Endothelial cell of umbilical vein (primary cell): ENCODE measurements at regions of chr17 and their contacts with region 1.

Region 1: DNA sequence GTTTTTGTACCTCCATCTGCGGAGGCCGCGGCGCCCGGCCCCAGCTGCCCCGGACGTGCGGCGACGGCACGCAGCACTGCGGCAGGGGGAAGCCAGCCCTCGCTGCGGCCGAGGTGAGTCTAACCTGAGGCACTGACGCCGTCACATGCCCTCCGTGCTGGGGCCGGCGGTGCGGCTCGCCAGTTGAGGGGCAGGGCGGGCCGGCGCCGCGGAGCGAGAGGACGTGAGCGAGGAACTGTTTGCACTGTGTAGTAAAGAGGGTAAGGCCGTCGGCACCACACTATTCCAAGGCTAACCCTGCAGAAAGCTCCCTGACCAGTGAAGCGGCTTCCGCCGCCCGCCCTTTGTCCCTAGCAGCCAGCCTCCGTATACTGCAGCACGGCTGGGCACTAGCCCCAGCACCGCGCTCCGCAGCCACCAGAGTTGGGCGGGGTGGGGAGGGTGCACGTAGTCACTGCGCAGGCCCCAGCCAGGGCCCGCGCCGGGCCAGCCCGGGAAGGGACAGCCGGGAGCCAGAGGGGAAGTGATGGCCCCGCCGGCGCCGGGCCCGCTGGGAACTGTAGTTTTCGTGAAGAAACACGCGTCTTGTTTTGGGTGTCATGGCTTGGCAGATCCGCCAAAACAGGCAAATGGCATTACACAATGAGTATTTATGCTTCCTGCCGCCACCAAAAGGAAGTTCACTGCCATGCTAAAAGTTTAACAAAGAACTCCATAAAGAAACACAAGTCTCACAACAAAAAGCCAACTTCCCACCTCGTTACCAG is 580 bp upstream of the KANSL1 start:
- DNase-seq: peak; percentile 95
- H3K4me3 ChIP-seq: peak overlapping the region; percentile 33 to 90 (median 64)
- H3K27ac ChIP-seq: peak overlapping the region; percentile 62
- H3K4me1 ChIP-seq: peaks cover 26% of the 10 kb centered on the region
- H3K27me3 ChIP-seq: no peaks in the 10 kb centered on the region
- CTCF ChIP-seq: no peak
- POLR2A ChIP-seq: peak; percentile 84

Region 2: GRCh38 chr17:45940826-45941225 is 253.0 kb before region 1 on chr17:
- CTCF ChIA-PET with region 1: no interaction called
- POLR2A ChIA-PET with region 1: no interaction called
- dilution Hi-C with region 1: no loop called
- intact Hi-C with region 1: no loop called
- DNase-seq: no peak
- H3K4me3 ChIP-seq: no peak overlapping the region
- H3K27ac ChIP-seq: no peak overlapping the region
- H3K4me1 ChIP-seq: no peaks in the 10 kb centered on the region
- H3K27me3 ChIP-seq: peaks cover 8 to 13% of the 10 kb centered on the region in 2 experiments
- CTCF ChIP-seq: no peak
- POLR2A ChIP-seq: no peak

Region 3: DNA sequence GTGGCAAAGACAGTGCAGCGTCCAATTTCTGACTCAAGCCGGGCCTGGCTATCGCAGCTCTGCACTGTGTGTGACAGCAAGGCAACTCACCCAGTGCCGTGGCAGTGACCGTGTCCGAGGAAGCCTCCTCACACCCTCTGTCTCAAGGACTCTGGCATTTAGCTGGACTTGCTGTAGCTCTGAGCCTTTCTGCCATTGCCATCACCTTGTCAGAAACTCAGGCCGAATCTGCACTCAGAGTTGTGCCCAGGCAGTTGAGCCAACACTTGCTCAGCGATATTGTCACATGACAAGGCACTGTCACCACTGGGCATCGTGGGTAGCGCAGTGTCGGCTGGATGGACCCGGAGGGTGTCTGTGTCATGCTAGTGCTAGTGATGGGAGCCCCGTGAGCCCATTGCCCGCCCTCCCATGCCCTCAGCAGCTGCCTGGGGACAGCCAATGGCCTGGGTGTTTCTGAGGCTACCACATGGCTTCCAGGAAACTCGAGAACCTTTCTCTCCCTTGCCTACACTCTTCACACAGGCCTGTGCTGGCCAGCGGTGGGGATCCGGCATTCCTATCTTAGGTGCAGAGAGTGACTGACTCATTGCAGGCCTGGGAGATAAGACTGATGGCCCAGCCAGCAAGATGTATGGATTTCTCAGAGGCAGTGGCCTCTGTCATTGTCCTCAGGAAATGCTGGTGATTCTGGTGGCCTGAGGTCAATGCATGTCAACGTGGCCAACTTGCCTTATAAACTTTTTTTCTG is 216.9 kb before region 1 on chr17:
- CTCF ChIA-PET with region 1: no interaction called
- POLR2A ChIA-PET with region 1: no interaction called
- dilution Hi-C with region 1: no loop called
- intact Hi-C with region 1: no loop called
- DNase-seq: no peak
- H3K4me3 ChIP-seq: no peak overlapping the region
- H3K27ac ChIP-seq: no peak overlapping the region
- H3K4me1 ChIP-seq: no peaks in the 10 kb centered on the region
- H3K27me3 ChIP-seq: peaks cover 0 to 5% of the 10 kb centered on the region in 2 experiments
- CTCF ChIP-seq: no peak
- POLR2A ChIP-seq: no peak

Region 4: DNA sequence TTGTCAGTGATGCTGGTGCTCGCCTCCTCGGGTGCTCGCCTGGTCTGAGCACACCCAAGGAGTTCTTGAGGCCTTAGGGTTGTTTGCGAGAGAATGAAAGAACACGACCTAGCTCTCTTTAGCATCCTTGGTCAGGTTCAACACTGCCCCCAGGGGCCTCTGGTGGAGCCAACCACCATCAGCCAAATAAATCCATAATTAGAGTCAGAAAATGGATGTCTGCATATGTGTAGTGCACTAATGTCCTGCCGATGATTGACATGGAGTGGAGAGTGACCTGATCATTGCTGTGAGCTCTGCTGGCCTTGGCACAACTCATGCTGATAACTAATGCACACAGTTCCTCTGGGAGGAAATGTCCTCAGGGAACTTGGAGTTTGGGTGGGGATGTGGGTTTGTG is 202.9 kb before region 1 on chr17:
- CTCF ChIA-PET with region 1: no interaction called
- POLR2A ChIA-PET with region 1: no interaction called
- dilution Hi-C with region 1: no loop called
- intact Hi-C with region 1: no loop called
- DNase-seq: no peak
- H3K4me3 ChIP-seq: no peak overlapping the region
- H3K27ac ChIP-seq: no peak overlapping the region
- H3K4me1 ChIP-seq: no peaks in the 10 kb centered on the region
- H3K27me3 ChIP-seq: peaks cover 0 to 2% of the 10 kb centered on the region in 2 experiments
- CTCF ChIP-seq: no peak
- POLR2A ChIP-seq: no peak

Region 5: GRCh38 chr17:46002311-46002972 is 191.4 kb before region 1 on chr17:
- CTCF ChIA-PET with region 1: interaction called, 5 read pairs
- POLR2A ChIA-PET with region 1: no interaction called
- dilution Hi-C with region 1: no loop called
- intact Hi-C with region 1: loop called (anchors 5 kb)
- DNase-seq: peak; percentile 60
- H3K4me3 ChIP-seq: no peak overlapping the region
- H3K27ac ChIP-seq: no peak overlapping the region
- H3K4me1 ChIP-seq: no peaks in the 10 kb centered on the region
- H3K27me3 ChIP-seq: no peaks in the 10 kb centered on the region
- CTCF ChIP-seq: peak; percentile 79 to 81
- POLR2A ChIP-seq: no peak

Region 6: GRCh38 chr17:46061435-46061834 is 132.4 kb before region 1 on chr17:
- CTCF ChIA-PET with region 1: interaction called, 52 read pairs
- POLR2A ChIA-PET with region 1: no interaction called
- dilution Hi-C with region 1: no loop called
- intact Hi-C with region 1: loop called (anchors 1 kb)
- DNase-seq: peak; percentile 49
- H3K4me3 ChIP-seq: no peak overlapping the region
- H3K27ac ChIP-seq: no peak overlapping the region
- H3K4me1 ChIP-seq: peaks cover 19% of the 10 kb centered on the region
- H3K27me3 ChIP-seq: no peaks in the 10 kb centered on the region
- CTCF ChIP-seq: no peak
- POLR2A ChIP-seq: no peak

Region 7: GRCh38 chr17:46108550-46109110 is 85.2 kb before region 1 on chr17:
- CTCF ChIA-PET with region 1: interaction called, 6 read pairs
- POLR2A ChIA-PET with region 1: no interaction called
- dilution Hi-C with region 1: no loop called
- intact Hi-C with region 1: loop called (anchors 5 kb)
- DNase-seq: peak; percentile 65
- H3K4me3 ChIP-seq: peak overlapping the region in 1 of 3 experiments; percentile 10
- H3K27ac ChIP-seq: peak overlapping the region; percentile 7
- H3K4me1 ChIP-seq: peaks cover 41% of the 10 kb centered on the region
- H3K27me3 ChIP-seq: no peaks in the 10 kb centered on the region
- CTCF ChIP-seq: no peak
- POLR2A ChIP-seq: no peak

Region 8: GRCh38 chr17:46152423-46152822 is 41.4 kb before region 1 on chr17:
- CTCF ChIA-PET with region 1: interaction called, 14 read pairs
- POLR2A ChIA-PET with region 1: interaction called, 4 read pairs
- dilution Hi-C with region 1: no loop called
- intact Hi-C with region 1: loop called (anchors 5 kb)
- DNase-seq: no peak
- H3K4me3 ChIP-seq: no peak overlapping the region
- H3K27ac ChIP-seq: no peak overlapping the region
- H3K4me1 ChIP-seq: peaks cover 55% of the 10 kb centered on the region
- H3K27me3 ChIP-seq: no peaks in the 10 kb centered on the region
- CTCF ChIP-seq: no peak
- POLR2A ChIP-seq: no peak

Region 9: DNA sequence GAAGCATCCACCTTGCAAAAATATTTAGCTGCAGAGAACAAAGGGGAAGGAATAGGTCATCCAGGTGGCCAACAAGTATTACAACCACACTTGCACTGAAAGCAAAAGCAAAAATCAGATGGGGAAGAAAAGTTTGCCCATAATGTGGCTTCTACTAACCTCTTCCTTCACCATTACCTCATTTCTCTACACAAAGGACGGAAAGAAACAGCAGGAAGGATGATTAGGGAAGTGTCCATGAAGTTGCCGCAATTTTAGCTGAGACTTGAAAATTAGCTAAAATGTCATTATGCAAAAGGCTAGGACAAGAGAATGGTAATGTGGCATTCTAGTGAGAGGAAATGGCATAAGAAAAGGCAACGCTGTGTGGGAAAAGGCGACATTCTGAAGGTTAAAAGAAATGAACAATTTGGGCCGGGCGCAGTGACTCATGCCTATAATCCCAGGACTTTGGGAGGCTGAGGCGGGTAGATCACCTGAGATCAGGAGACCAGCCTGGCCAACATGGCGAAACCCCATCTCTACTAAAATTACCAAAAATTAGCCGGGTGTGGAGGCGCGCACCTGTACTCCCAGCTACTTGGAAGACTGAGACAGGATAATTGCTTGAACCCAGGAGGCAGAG is 14.3 kb before region 1 on chr17:
- CTCF ChIA-PET with region 1: interaction called, 21 read pairs
- POLR2A ChIA-PET with region 1: no interaction called
- dilution Hi-C with region 1: no loop called
- intact Hi-C with region 1: loop called (anchors 2 kb)
- DNase-seq: no peak
- H3K4me3 ChIP-seq: no peak overlapping the region
- H3K27ac ChIP-seq: no peak overlapping the region
- H3K4me1 ChIP-seq: no peaks in the 10 kb centered on the region
- H3K27me3 ChIP-seq: no peaks in the 10 kb centered on the region
- CTCF ChIP-seq: no peak
- POLR2A ChIP-seq: no peak

Region 10: GRCh38 chr17:46940621-46941404 is 747.0 kb after region 1 on chr17:
- CTCF ChIA-PET with region 1: no interaction called
- POLR2A ChIA-PET with region 1: no interaction called
- dilution Hi-C with region 1: no loop called
- intact Hi-C with region 1: no loop called
- DNase-seq: peak; percentile 78
- H3K4me3 ChIP-seq: no peak overlapping the region
- H3K27ac ChIP-seq: no peak overlapping the region
- H3K4me1 ChIP-seq: peaks cover 11% of the 10 kb centered on the region
- H3K27me3 ChIP-seq: no peaks in the 10 kb centered on the region
- CTCF ChIP-seq: peak; percentile 90 to 95
- POLR2A ChIP-seq: peak; percentile 40